Brain microvascular endothelial cell (primary cell): ENCODE measurements at regions of chr4 and their contacts with region 1.

Region 1: GRCh38 chr4:25767877-25768725 is 94.7 kb downstream of the SEL1L3 start:
- DNase-seq: peak; percentile 70
- H3K4me3 ChIP-seq: no peak overlapping the region
- H3K27ac ChIP-seq: no peak overlapping the region
- H3K27me3 ChIP-seq: no peaks in the 10 kb centered on the region
- CTCF ChIP-seq: peak; percentile 99

Region 2: DNA sequence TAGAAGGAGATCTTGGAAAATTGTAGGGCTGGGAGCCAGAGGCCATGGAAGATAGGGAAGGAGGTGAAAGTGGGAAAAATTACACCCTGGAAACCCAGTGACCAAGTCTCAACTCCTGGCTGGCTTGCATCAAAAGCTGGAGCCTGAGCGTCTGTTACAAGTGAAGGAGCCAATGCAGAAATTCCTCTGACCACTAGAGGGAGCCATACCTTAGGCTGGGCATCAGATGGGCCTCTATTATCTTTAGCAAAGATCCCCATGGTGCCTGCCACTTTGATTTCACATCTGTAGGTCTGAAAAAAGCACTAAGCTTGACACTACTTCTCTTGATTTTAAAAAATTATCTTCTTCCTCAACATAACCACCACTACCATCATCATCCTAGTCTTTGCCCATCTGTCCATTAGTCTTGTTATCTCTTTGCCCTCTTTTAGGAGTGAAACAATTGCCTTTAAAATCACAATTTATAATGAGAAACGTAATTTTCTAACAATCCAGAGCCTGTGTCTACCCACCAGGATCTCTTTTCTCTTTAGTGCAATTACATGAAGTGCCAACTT is 328.1 kb before region 1 on chr4:
- in situ Hi-C with region 1: loop called (anchors 25 kb)
- DNase-seq: peak; percentile 82
- H3K4me3 ChIP-seq: no peak overlapping the region
- H3K27ac ChIP-seq: no peak overlapping the region
- H3K27me3 ChIP-seq: no peaks in the 10 kb centered on the region
- CTCF ChIP-seq: peak; percentile 93

Region 3: DNA sequence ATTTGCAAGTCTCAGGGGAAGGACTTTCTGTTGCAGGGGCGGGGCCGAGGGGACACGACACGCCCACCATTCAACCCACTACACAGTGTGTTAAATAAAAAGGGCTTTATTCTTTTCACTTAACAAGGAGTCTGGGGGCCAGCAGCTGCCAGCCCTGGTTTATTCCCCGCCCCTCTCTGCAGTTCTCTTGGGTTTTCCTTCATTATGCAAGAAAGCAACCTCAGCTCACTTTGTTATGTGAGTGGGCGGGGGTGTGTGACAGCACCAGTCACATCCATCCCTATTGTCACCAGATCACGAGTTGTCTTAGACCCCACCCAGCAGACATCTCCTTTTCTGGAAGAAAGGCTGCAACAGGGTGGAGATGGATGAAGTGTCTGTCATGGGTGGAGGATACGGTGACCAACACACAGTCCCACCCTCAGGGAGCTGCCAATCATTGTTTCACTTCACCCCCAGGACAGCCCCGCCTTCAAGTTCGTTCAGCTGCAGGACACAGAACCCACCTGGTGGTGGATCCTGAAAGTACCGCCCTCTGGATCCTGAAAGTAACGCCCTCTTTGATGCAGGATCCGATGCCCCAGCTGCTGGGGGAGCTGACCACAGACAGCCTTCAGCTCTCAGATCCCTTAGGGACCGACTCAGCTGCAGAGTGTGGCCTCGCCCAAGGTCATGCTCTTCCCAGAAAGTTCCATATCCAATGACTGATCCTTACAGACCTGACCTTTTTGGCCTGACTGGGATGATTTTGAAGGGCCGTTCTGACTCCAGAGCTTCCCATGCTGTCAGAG is 225.5 kb after region 1 on chr4:
- in situ Hi-C with region 1: no loop called
- DNase-seq: no peak
- H3K4me3 ChIP-seq: no peak overlapping the region
- H3K27ac ChIP-seq: no peak overlapping the region
- H3K27me3 ChIP-seq: no peaks in the 10 kb centered on the region
- CTCF ChIP-seq: peak; percentile 64